ENCODE measurements at regions of chr5 and their contacts with region 1.

Region 1: DNA sequence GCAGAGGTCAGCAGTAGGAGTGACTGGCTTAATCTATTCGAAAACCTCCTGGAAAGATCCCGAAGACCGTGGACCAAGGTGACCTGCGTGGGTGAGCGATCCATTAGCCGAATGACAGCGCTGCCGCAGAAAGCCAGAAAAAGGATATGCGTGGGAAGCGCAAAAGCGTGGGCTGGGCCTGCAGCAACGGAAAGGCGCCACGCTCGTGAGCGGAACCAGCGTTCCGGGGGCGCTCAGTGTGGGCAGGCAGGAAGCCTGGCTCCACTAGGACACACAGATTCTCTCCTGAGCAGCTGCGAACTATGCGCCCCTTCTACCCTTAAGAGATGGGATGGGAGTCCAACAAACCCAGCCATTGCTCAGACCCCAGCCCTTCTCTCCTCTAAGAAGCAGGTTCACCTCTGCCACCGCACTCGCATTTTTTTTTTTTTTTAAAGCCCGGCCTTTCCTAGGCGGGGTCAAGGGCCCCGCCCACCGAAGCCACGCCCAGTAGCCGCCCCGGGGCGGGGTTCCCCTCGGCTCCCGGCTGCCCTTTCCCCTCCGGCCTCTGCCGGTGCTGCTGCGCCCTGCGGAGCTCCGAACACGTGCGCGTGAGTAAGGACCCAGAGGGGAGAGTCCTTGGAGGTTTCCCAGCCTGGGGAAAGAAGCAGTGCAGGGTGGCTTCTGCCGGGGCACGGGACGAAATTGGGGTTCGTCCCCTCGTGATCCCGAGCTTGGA is 19.8 kb upstream of the MATR3 start:
- DNase-seq: peak; percentile 92
- H3K4me3 ChIP-seq: peak overlapping the region; percentile 91
- H3K27ac ChIP-seq: peak overlapping the region; percentile 74
- H3K4me1 ChIP-seq: peaks cover 48% of the 10 kb centered on the region
- CTCF ChIP-seq: 0 out of 2 replicates have a peak, but pooled peaks have one; percentile 29

Region 2: GRCh38 chr5:139285651-139286392 is 12.1 kb after region 1 on chr5:
- CTCF ChIA-PET with region 1: interaction called, 5 read pairs
- POLR2A ChIA-PET with region 1: interaction called, 14 read pairs
- intact Hi-C with region 1: no loop called
- DNase-seq: no peak
- H3K4me3 ChIP-seq: no peak overlapping the region
- H3K27ac ChIP-seq: peak overlapping the region; percentile 7
- H3K4me1 ChIP-seq: peaks cover 14% of the 10 kb centered on the region
- CTCF ChIP-seq: no peak

Region 3: GRCh38 chr5:139341650-139342422 is 68.1 kb after region 1 on chr5 and contains the start of gene PAIP2:
- CTCF ChIA-PET with region 1: no interaction called
- POLR2A ChIA-PET with region 1: interaction called, 6 read pairs
- intact Hi-C with region 1: loop called (anchors 5 kb)
- DNase-seq: peak; percentile 97
- H3K4me3 ChIP-seq: peak within 1 kb of the TSS; percentile 88
- H3K27ac ChIP-seq: peak within 1 kb of the TSS; percentile 92
- H3K4me1 ChIP-seq: peaks cover 30% of the 10 kb centered on the region
- CTCF ChIP-seq: peak; percentile 79
- total RNA-seq, gene PAIP2: 64.3 and 73.6 TPM in 2 replicates

Region 4: DNA sequence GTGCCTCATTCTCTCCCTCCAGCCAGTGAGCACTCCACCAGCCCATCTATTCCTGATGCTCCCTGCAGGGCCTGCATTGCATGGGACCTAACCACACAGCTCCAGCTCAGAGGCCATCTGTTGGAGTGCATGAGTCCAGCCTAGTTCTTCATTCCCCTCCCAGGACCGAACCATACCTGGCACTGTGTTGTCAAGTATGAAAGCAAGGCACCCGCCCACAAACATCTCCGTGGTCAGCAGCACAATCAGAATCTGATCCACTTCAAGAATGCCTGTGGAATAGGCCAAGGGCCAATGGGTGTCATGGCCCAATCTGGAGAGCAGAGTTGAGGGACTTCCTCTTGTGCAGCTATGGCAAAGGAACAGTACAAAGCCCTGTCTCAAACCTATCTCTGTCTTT is 103.5 kb after region 1 on chr5:
- CTCF ChIA-PET with region 1: no interaction called
- POLR2A ChIA-PET with region 1: no interaction called
- intact Hi-C with region 1: no loop called
- DNase-seq: no peak
- H3K4me3 ChIP-seq: no peak overlapping the region
- H3K27ac ChIP-seq: no peak overlapping the region
- H3K4me1 ChIP-seq: peaks cover 5% of the 10 kb centered on the region
- CTCF ChIP-seq: no peak

Region 5: DNA sequence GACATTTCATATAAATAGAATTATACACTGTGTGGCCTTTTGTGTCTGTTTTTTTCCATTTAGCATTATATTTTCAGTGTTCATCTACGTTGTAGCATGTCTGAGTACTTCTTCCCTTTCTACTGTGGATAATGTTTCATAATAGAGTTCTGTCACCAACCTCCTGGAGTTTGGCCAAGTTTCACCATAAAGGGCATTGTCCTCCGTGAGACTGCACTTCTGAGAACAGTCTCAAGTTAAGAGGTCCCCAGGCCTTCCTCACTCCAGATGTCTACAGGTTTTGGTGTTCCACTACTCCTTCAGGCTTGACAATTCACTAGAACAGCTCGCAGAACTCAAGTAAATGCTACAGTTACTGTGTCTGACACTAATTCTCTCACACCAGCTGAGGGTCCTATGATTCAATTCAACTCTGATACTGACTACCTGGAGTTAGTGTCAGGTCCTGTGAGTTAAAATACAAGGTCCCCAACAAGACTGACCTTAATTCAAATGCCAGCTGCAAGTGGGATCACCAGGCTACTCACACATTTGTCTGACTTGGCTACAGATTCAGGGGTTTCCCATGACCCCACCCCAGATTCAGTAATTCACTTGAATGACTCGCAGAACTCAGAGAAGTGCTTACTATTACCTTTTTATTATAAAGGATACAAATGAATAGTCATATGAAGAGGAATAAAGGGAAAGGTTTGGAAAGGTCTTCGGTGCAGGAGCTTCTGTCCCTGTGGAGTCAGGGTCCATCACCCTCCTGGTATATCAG is 1322.0 kb after region 1 on chr5:
- CTCF ChIA-PET with region 1: no interaction called
- POLR2A ChIA-PET with region 1: no interaction called
- intact Hi-C with region 1: no loop called
- DNase-seq: no peak
- H3K4me3 ChIP-seq: no peak overlapping the region
- H3K27ac ChIP-seq: no peak overlapping the region
- H3K4me1 ChIP-seq: no peaks in the 10 kb centered on the region
- CTCF ChIP-seq: no peak

Measured in OCI-LY7 (cell line).